Aorta (tissue), 5 donors: ENCODE measurements at regions of chr6 and their contacts with region 1.

Region 1: DNA sequence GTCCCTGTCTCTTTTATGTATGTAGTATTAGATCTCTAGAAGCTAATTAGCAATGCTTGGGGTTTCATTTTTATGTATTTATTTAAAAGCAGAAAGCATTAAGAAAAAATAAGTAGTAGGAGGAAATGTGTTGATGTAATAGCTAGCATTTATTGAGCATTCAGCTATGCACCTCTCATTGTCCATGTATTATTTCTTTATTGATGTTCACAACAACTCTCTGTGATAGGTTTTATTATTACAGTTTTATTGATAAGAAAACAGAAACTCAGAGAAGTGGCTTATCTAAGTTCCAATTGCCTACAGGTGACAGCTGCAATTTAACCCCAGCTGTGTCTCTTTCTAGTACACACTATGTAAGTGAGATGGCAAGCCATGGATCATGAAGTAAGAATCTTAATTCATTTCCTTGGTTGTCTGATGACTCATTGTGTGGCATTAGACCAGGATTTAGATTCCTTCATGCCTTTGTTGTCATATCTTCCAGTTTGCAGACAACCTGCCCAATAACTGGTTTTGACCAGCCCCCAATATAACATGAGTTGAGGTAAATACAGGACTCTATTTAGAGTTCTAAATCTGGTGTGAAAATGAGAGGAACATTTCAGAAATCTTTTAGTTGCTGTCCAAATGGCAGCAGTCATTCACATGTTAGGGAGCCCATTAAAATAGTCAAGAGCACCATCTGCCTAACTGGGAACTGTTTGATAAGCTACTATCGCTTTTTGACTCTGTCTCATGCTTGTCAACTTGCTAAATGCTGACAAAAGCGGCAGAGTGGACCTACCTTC is 170.8 kb upstream of the PHACTR1 start:
- DNase-seq: no peak
- ATAC-seq: no peak
- H3K4me3 ChIP-seq: no peak overlapping the region
- H3K27ac ChIP-seq: peak overlapping the region in 1 of 2 donors; percentile 73
- H3K4me1 ChIP-seq: peaks cover 1 to 6% of the 10 kb centered on the region in 2 donors
- H3K27me3 ChIP-seq: no peaks in the 10 kb centered on the region

Region 2: GRCh38 chr6:12313992-12314805 is 231.6 kb before region 1 on chr6:
- intact Hi-C with region 1: no loop called
- DNase-seq: no peak
- ATAC-seq: peak; percentile 52
- H3K4me3 ChIP-seq: peak overlapping the region in 1 of 2 donors; percentile 11
- H3K27ac ChIP-seq: peak overlapping the region; percentile 57 to 94
- H3K4me1 ChIP-seq: peaks cover 0 to 3% of the 10 kb centered on the region in 2 donors
- H3K27me3 ChIP-seq: no peaks in the 10 kb centered on the region

Region 3: GRCh38 chr6:12485283-12485682 is 60.5 kb before region 1 on chr6:
- intact Hi-C with region 1: loop called in 1 of 2 experiments (anchors 5 kb)
- DNase-seq: no peak
- ATAC-seq: no peak
- H3K4me3 ChIP-seq: no peak overlapping the region
- H3K27ac ChIP-seq: no peak overlapping the region
- H3K4me1 ChIP-seq: peaks cover 2 to 5% of the 10 kb centered on the region in 2 donors
- H3K27me3 ChIP-seq: no peaks in the 10 kb centered on the region

Region 4: GRCh38 chr6:13146442-13146841 is 600.6 kb after region 1 on chr6:
- intact Hi-C with region 1: no loop called
- DNase-seq: no peak
- ATAC-seq: no peak
- H3K4me3 ChIP-seq: no peak overlapping the region
- H3K27ac ChIP-seq: no peak overlapping the region
- H3K4me1 ChIP-seq: peaks cover under 1 to 7% of the 10 kb centered on the region in 2 donors
- H3K27me3 ChIP-seq: no peaks in the 10 kb centered on the region